AG04450 (cell line): ENCODE measurements at regions of chr11 and their contacts with region 1.

Region 1: DNA sequence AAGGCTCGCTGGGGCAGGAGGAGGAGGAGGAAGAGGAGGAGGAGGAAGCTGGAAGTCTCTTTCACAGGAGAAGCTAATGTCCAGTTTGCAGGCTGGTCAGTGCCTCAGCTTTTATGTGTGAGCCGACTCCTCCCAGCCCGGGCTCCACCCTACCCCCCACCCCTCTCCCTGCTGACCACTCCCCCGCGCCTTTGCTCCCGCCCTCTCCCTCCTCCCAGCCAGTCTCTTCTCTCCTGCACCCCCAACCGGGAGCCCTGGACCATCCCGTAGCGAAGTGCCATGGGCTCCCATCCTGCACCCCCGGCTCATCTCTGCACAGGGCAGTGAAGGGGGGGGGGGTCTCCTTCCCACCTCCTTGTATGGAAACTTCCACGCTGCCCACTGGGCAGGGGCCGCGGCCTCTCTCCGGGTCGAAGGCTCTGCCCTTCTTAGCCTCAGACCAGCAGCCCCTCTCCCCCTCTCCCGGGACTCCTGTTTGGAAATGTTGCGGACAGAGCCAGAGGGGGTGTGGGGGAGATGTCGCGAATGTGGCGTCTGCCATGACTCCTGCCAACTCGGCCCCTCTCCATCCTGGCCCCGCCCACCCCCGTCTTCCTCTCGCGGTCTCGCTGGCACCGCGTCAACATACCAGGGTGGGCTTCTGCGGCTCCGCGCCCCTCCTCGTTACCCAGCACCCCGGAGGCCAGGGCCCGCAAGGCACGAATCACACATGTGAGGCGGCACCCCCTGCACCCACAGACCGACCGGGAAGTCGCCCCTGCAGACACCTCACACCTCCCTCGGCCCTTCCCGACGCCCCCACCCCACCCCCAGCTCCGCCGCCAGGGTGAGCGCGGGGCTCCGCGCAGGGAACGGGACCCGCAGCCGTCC is 1.8 kb downstream of the IGF2 start:
- DNase-seq: peak; percentile 37
- H3K4me3 ChIP-seq: peak overlapping the region; percentile 47
- H3K27ac ChIP-seq: peak overlapping the region; percentile 31
- H3K27me3 ChIP-seq: peaks cover 39% of the 10 kb centered on the region
- CTCF ChIP-seq: no peak

Region 2: GRCh38 chr11:2097356-2097997 is 40.0 kb before region 1 on chr11:
- CTCF ChIA-PET with region 1: interaction called, 5 read pairs
- POLR2A ChIA-PET with region 1: interaction called, 14 read pairs
- DNase-seq: peak; percentile 69
- H3K4me3 ChIP-seq: no peak overlapping the region
- H3K27ac ChIP-seq: peak overlapping the region; percentile 93
- H3K27me3 ChIP-seq: no peaks in the 10 kb centered on the region
- CTCF ChIP-seq: no peak

Region 3: GRCh38 chr11:2415601-2416380 is 278.4 kb after region 1 on chr11:
- CTCF ChIA-PET with region 1: no interaction called
- POLR2A ChIA-PET with region 1: no interaction called
- DNase-seq: no peak
- H3K4me3 ChIP-seq: no peak overlapping the region
- H3K27ac ChIP-seq: no peak overlapping the region
- H3K27me3 ChIP-seq: peaks cover 3% of the 10 kb centered on the region
- CTCF ChIP-seq: no peak